ENCODE measurements at regions of chr20 and their contacts with region 1.

Region 1: DNA sequence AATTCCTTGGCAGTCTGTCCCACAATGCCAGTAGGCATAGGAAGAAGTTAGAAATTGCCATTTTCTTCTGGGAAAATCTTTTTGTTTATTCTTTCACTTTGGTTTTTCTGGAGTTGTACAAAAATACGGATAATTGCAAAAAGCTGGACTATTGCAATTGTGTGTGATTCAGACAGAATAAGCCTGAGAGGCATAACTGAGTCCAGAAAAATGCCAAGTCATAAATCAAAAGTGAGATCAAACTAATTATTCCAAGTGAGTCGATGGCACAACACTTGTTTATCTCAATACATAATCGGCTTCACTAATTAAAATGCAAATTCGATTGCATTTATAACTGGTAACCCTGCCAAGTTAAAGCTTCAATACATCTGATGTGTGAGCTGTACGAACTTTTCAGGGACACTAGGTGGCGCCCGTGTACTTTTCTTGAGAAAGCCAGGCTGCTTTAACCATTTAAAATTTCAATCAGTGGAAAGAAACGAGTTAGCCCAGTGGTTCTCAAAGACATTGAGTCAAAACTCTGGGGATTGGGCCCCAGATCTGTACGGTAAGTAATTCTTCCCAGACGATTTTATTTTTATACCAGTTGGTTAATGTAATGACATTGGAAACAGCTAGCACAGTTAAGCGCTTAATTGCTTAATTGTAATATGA is 102.6 kb downstream of the LAMP5 start:
- DNase-seq: peak; percentile 61
- ATAC-seq: peak; percentile 74
- H3K4me3 Mint-ChIP-seq: no peak overlapping the region
- H3K27ac Mint-ChIP-seq: no peak overlapping the region
- H3K4me1 Mint-ChIP-seq: peaks cover 3% of the 10 kb centered on the region; the same call in 1 of the 2 replicates
- H3K27me3 Mint-ChIP-seq: no peaks in the 10 kb centered on the region
- CTCF ChIP-seq: peak; percentile 80

Region 2: GRCh38 chr20:9241232-9241692 is 375.7 kb before region 1 on chr20:
- CTCF ChIA-PET with region 1: no interaction called
- POLR2A ChIA-PET with region 1: no interaction called
- DNase-seq: no peak
- ATAC-seq: no peak
- H3K4me3 Mint-ChIP-seq: no peak overlapping the region
- H3K27ac Mint-ChIP-seq: no peak overlapping the region
- H3K4me1 Mint-ChIP-seq: peaks cover 13% of the 10 kb centered on the region
- H3K27me3 Mint-ChIP-seq: no peaks in the 10 kb centered on the region
- CTCF ChIP-seq: no peak

Region 3: DNA sequence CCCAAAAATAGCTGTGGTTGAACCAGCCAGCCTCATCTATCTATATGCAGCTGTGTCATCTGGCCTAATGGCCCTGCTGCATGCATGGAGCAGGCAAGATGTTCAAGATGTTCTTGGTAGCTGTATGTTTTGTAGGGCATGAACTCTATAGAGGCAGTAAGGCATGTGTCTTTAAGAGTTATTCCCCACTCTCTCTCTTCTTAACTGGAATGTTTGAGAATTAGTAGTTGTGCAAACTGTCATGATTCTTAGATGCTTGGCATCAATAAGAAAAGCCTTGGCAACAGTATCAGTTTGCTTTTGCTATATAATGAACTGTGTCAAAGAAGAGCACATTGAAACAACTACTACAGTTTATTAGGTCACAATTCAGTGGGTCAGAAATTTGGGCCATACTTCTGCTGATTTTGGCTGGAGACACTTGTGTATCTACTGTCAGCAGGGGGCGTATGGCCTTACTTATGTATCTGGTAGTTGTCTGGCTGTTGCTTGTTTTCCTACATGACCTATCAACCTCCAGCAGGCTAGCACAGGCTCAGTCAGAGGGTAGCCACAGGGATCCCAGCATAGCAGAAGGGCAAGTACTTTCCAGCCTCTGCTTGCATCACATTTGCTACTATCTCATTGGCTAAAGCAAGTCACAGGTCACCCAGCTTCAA is 158.7 kb before region 1 on chr20:
- CTCF ChIA-PET with region 1: interaction called, 18 read pairs
- POLR2A ChIA-PET with region 1: no interaction called
- DNase-seq: peak; percentile 47
- ATAC-seq: peak; percentile 96
- H3K4me3 Mint-ChIP-seq: no peak overlapping the region
- H3K27ac Mint-ChIP-seq: no peak overlapping the region
- H3K4me1 Mint-ChIP-seq: no peaks in the 10 kb centered on the region
- H3K27me3 Mint-ChIP-seq: no peaks in the 10 kb centered on the region
- CTCF ChIP-seq: no peak; the same call in 1 of the 2 replicates

Region 4: GRCh38 chr20:9488063-9488462 is 128.9 kb before region 1 on chr20:
- CTCF ChIA-PET with region 1: no interaction called
- POLR2A ChIA-PET with region 1: no interaction called
- DNase-seq: no peak
- ATAC-seq: no peak
- H3K4me3 Mint-ChIP-seq: no peak overlapping the region
- H3K27ac Mint-ChIP-seq: no peak overlapping the region
- H3K4me1 Mint-ChIP-seq: peaks cover under 1% of the 10 kb centered on the region; the same call in 1 of the 2 replicates
- H3K27me3 Mint-ChIP-seq: peaks cover 2% of the 10 kb centered on the region
- CTCF ChIP-seq: no peak

Region 5: DNA sequence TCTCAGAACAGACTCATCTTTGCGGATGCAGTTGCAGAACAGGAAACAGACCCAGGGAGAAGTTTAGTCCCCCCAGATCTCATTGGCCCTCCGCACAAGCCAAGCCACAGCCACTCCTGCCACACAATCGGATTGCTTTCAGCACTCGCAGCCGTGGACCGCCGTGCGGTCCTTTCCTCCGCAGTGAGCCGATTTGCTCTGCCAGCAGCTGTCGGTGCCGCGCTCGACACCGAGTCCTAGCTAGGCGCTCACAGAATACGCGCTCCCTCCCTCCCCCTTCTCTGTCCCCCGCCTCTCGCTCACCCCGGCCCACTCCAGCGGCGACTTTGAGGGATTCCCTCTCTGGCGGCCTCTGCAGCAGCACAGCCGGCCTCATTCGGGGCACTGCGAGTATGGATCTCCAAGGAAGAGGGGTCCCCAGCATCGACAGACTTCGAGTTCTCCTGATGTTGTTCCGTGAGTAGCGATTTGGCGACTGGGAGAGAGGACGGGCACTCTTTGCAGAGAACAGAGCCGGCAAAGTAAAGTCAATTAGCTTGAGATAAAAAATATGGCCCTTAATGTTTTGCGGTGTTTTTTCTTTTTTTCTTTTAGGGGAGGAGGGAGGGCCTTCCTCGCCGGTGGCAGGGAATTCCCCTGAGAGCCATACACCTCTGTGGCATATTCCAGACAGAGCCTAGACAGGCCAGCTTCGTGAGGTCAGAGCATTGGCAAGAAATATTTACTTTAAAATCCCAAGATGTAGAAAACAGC is 102.3 kb before region 1 on chr20 and contains the start of gene LAMP5:
- CTCF ChIA-PET with region 1: interaction called, 11 read pairs
- POLR2A ChIA-PET with region 1: no interaction called
- DNase-seq: peak; percentile 82
- ATAC-seq: peak; percentile 74
- H3K4me3 Mint-ChIP-seq: peak within 1 kb of the TSS; percentile 79
- H3K27ac Mint-ChIP-seq: no peak within 1 kb of the TSS
- H3K4me1 Mint-ChIP-seq: peaks cover 50% of the 10 kb centered on the region
- H3K27me3 Mint-ChIP-seq: peaks cover 100% of the 10 kb centered on the region
- CTCF ChIP-seq: no peak
- total RNA-seq, gene LAMP5: 0.11 to 0.37 TPM (median 0.31 TPM) in 3 replicates

Region 6: DNA sequence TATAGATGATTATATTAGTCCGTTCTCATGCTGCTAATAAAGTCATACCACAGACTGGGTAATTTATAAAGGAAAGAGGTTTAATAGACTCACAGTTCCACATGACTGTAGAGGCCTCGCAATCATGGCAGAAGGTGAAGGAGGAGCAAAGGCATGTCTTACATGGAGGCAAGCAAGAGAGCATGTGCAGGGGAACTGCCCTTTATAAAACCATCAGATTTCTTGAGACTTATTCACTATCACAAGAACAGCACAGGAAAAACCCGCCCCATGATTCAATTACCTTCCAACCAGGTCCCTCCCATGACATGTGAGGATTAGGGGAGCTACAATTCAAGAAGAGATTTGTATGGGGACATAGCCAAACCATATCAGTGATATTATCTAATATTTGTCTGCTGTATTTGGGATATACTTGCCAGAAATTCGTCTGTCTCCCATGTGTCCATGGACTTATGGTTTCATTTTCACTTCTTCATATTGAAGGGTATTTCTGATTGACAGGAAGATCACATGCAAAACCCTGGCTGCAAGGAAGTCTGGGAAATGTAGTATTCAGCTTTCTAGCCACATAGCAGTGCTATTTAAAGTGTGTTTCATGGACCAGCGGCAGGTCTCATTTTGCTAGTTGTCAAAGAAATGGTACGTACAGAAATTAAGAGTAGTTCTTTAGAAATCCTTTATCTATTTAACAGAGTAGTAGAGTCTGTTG is 272.5 kb after region 1 on chr20:
- CTCF ChIA-PET with region 1: interaction called, 48 read pairs
- POLR2A ChIA-PET with region 1: no interaction called
- DNase-seq: no peak
- ATAC-seq: no peak
- H3K4me3 Mint-ChIP-seq: no peak overlapping the region
- H3K27ac Mint-ChIP-seq: no peak overlapping the region
- H3K4me1 Mint-ChIP-seq: peaks cover 11% of the 10 kb centered on the region
- H3K27me3 Mint-ChIP-seq: no peaks in the 10 kb centered on the region
- CTCF ChIP-seq: no peak

Region 7: DNA sequence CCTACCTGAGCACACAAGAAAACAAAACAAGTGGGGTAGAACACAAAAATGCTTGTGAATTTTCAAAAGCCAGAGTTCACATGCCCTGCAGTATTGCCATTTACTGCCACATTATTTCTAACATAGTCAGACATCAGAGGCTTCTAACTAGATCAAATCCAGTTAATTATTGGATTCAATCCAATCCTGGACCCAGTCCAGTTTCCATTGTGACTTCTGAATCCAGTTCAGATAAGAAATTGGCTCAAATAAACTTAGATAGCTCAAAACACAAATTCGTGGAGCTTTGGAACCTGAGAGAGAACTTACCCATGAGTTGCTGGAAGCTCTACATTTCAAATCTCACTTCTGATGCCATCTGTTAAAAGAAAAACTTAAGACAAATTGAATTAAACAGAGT is 332.6 kb after region 1 on chr20:
- CTCF ChIA-PET with region 1: interaction called, 15 read pairs
- POLR2A ChIA-PET with region 1: no interaction called
- DNase-seq: no peak
- ATAC-seq: no peak
- H3K4me3 Mint-ChIP-seq: no peak overlapping the region
- H3K27ac Mint-ChIP-seq: no peak overlapping the region
- H3K4me1 Mint-ChIP-seq: no peaks in the 10 kb centered on the region
- H3K27me3 Mint-ChIP-seq: no peaks in the 10 kb centered on the region
- CTCF ChIP-seq: no peak

Region 8: DNA sequence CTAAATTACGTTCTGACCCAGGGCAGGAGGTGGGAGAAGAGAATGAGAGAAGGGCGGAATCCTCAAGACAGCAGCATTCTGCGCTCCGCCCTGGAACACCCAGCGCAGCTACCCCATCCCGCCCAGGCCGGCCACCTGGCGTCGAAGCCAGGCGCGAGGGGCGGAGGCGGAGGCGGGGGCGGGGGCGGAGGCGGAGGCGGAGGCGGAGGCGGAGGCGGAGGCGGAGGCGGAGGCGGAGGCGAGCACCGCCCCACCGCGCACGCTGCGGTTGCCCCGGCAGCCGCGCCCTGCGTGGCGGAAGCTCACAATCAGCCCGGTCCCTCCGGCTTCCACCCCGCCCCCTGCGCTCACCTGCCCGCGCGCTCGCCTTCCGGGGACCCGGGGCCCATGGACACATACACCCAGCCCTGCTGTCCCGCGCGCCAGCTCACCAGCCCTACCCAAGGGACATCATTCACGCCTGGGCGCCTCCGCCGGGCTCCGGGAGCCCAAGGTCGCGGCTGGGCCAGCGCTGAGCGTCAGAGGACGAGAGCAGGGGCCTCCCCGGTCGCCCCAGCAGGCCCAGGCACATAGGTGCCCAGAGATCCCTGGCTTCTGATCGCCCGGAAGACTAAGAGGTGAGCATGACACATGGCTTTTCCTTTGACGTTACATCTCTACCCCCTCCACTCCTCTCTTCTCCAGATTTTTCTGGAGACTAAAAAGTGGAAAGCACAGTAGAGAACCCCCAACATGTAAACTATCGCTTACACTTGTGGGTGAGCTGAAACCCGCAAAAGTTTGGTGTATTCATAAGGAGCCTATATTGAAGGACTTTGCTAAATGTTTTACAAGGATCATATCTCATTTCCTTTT is 418.0 kb after region 1 on chr20 and contains the start of gene ANKEF1:
- CTCF ChIA-PET with region 1: interaction called, 10 read pairs
- POLR2A ChIA-PET with region 1: no interaction called
- DNase-seq: peak; percentile 81
- ATAC-seq: peak; percentile 97
- H3K4me3 Mint-ChIP-seq: peak within 1 kb of the TSS; percentile 72
- H3K27ac Mint-ChIP-seq: no peak within 1 kb of the TSS
- H3K4me1 Mint-ChIP-seq: peaks cover 6% of the 10 kb centered on the region
- H3K27me3 Mint-ChIP-seq: peaks cover 20% of the 10 kb centered on the region
- CTCF ChIP-seq: no peak
- total RNA-seq, gene ANKEF1: 7.1 to 10.3 TPM (median 10.3 TPM) in 3 replicates